CD14-positive monocyte (primary cell): ENCODE measurements at regions of chr9 and their contacts with region 1.

Region 1: DNA sequence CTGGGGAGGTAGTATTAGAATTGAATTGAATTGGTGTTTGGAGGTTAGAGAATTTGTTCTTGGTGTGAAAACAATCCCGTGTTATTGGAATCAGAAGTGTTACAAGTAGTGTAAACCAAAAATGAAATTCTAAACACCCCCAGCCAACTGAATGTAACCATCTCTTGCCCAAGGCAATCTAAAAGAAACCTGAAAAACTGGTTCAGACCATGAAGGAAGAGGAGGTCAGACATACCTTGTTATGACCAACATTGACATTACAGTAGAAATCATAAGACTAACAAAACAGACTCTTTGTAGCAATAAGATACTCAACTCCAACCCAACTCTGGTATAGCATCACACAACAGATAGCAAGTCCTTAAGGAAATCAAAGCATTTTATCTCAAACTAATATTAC is 158.9 kb downstream of the TUSC1 start:
- DNase-seq: no peak
- H3K4me3 ChIP-seq: no peak overlapping the region
- H3K4me3 Mint-ChIP-seq: no peak overlapping the region
- H3K27ac ChIP-seq: no peak overlapping the region
- H3K27ac Mint-ChIP-seq: no peak overlapping the region
- H3K4me1 ChIP-seq: no peaks in the 10 kb centered on the region
- H3K4me1 Mint-ChIP-seq: no peaks in the 10 kb centered on the region
- H3K27me3 ChIP-seq: no peaks in the 10 kb centered on the region
- H3K27me3 Mint-ChIP-seq: peaks cover 0 to 1% (median 0%) of the 10 kb centered on the region in 3 donors
- CTCF ChIP-seq: no peak

Region 2: GRCh38 chr9:25570802-25571201 is 51.5 kb after region 1 on chr9:
- intact Hi-C with region 1: loop called in 1 of 2 experiments (anchors 10 kb)
- DNase-seq: no peak
- H3K4me3 ChIP-seq: no peak overlapping the region
- H3K4me3 Mint-ChIP-seq: no peak overlapping the region
- H3K27ac ChIP-seq: no peak overlapping the region
- H3K27ac Mint-ChIP-seq: no peak overlapping the region
- H3K4me1 ChIP-seq: no peaks in the 10 kb centered on the region
- H3K4me1 Mint-ChIP-seq: no peaks in the 10 kb centered on the region
- H3K27me3 ChIP-seq: no peaks in the 10 kb centered on the region
- H3K27me3 Mint-ChIP-seq: no peaks in the 10 kb centered on the region
- CTCF ChIP-seq: no peak

Region 3: DNA sequence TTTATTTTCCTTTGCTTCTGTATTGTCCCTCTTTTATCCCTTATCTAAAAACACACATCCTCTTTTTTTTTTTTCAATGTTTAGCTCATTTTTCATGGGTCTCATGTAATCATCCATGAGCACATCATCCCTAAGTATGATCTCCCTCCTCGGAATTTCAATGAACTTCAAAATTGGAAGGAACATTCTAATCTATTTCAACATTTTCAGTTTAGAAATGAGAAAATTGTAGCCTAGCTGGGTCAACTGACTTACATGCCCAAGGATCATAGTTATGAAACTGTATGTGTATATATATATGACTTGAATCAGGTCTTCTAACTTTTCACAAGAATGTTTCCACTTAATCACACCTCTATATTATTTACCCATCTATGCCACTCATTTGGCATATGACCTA is 81.2 kb after region 1 on chr9:
- intact Hi-C with region 1: no loop called
- DNase-seq: no peak
- H3K4me3 ChIP-seq: no peak overlapping the region
- H3K4me3 Mint-ChIP-seq: no peak overlapping the region
- H3K27ac ChIP-seq: no peak overlapping the region
- H3K27ac Mint-ChIP-seq: no peak overlapping the region
- H3K4me1 ChIP-seq: no peaks in the 10 kb centered on the region
- H3K4me1 Mint-ChIP-seq: no peaks in the 10 kb centered on the region
- H3K27me3 ChIP-seq: no peaks in the 10 kb centered on the region
- H3K27me3 Mint-ChIP-seq: no peaks in the 10 kb centered on the region
- CTCF ChIP-seq: no peak